Spleen (tissue), 13 donors: ENCODE measurements at regions of chr5 and their contacts with region 1.

Region 1: DNA sequence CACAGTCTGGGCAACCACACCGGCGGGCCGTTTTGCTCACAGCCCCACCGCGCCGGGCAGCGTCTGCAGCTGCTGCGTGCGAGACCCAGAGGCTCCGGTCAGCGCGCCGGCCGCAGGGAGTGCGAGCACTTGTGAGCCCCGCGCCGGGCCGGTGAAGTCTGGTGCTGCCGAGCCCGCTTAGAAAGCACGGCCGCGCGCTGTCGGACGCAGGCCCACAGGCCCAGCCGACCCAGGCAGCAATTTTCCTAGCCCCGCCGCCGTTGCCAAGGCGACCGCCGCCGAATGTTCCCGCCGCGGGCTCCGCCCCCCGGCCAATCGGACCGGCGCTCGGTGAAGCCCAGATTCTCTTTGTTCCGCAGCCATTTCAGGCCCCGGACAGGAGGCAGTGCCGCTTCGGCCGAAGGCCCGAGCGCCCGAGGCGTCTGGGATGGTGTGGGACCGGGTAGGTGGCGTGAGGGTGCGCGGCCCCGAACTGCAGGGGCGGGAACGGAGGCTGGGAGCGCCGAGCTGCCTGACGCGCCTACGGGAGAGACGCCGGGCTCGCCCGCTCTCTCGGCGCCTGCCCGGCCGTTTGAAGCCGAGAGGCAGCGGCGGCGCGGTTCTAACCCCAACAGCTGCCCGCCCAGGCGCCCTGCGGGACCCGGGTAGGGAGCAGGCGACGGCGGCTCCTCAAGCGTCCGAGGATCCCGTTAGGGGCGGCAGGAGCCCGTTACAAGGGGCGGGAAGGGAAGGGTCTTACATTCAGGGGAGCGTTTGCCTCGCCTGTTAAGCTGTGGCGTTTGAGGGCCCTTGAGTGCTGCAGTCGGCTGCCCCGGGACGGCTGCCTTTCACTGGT is at the start of gene TNPO1:
- DNase-seq: peak; percentile 99
- H3K4me3 ChIP-seq: peak within 1 kb of the TSS; percentile 64 to 76 (median 70)
- H3K27ac ChIP-seq: peak within 1 kb of the TSS; percentile 92 to 98 (median 98)
- H3K4me1 ChIP-seq: peaks cover 0 to 50% (median 33%) of the 10 kb centered on the region in 6 donors
- H3K27me3 ChIP-seq: no peaks in the 10 kb centered on the region
- CTCF ChIP-seq: peak in 2 of 11 experiments; percentile 10 to 22
- POLR2A ChIP-seq: peak; percentile 48 to 94 (median 53)
- total RNA-seq, gene TNPO1: 77.1 to 192 (median 94.6) TPM

Region 2: DNA sequence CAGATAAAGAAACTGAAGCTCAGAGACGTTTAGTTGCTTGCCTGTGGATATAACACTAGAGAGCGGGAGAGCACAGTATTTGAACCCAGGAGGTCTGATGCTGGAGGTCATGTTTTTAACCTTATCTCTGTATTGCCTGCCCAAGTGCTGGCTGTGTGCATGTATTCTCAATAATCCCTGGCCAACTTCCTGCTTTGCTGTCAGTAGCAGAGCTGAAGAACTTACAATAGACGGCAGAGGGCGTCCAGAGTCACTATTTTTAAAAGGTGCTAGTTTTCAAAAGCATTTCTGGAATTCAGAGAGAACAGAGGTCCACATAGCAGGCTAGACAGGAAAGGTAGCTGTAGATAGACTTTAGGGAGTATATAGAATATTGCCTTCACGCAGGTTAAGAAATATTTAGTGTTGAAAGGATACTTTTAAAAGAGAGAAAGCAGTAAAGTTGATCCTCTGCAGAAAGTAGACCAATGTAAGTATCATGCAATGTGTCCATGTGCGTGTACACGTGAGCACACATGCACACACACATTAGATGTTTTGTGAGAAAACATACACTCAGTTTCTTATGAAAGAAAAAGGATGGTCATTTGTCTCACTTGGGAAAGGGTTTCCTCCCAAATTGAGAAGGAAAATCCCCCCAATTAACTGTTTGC is 450.1 kb before region 1 on chr5:
- intact Hi-C with region 1: loop called (anchors 5 kb)
- DNase-seq: no peak
- H3K4me3 ChIP-seq: no peak overlapping the region
- H3K27ac ChIP-seq: peak overlapping the region in 1 of 8 donors; percentile 30
- H3K4me1 ChIP-seq: peaks cover 0 to 48% (median 24%) of the 10 kb centered on the region in 6 donors
- H3K27me3 ChIP-seq: no peaks in the 10 kb centered on the region
- CTCF ChIP-seq: peak; percentile 58 to 89 (median 78)
- POLR2A ChIP-seq: no peak

Region 3: DNA sequence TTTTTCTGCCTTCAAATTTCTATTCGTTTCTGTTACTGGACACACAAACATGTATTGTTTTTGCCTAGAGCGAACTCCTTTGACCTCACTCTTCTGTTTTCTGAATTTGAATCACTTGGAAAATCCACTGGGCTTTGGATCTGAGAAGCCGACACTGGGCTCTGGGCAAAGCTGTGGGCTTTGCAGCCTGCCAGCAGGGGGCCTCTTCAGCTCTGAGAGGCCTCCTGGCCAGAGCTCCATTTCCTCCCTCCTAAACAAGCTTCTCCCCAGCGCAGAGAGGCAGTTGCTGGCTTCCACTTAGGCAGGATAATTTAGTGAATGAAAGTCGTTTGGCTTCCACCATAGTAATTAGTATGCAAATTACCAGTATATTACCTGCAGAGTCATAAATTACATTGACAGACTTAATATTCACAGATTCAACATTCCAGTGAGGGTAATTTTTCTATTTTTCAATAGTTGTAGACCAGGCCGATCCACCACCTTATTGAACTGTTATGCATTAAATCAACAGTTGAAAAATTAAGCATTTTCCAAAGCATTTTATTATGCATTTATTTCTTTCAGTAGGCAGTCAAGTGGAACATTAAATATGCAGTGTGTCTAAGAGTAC is 205.3 kb before region 1 on chr5:
- intact Hi-C with region 1: loop called (anchors 10 kb)
- DNase-seq: peak; percentile 85
- H3K4me3 ChIP-seq: no peak overlapping the region
- H3K27ac ChIP-seq: no peak overlapping the region
- H3K4me1 ChIP-seq: peaks cover 0 to 8% (median 4%) of the 10 kb centered on the region in 6 donors
- H3K27me3 ChIP-seq: no peaks in the 10 kb centered on the region
- CTCF ChIP-seq: peak; percentile 34 to 93 (median 77)
- POLR2A ChIP-seq: no peak